Esophagus muscularis mucosa (tissue), 4 donors: ENCODE measurements at regions of chr2 and their contacts with region 1.

Region 1: DNA sequence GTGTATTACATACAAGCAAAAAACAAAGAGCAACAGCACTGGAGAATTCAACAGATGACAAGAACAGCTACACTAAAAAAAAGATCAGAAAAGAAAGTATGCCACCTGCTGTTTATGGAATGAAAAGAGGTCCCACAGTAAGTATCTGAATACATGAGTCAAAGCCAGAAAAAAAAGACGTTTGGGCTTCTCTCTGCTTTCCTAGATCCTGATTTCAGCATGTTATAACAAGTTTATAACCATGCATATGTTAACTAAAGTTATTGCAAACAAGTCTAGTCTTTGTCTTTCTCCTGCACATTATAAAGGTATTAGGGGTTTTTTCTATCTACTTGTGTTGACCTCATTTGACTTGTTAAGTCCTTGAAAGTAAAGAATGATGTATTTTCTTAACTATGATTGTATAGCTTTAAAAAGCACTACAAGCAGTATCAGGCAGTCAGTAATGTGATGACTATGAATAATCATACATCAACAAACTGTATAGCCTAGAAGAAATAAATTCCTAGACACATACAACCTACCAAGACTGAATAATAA is 108.5 kb upstream of the COL5A2 start:
- DNase-seq: no peak
- H3K4me3 ChIP-seq: no peak overlapping the region
- H3K27ac ChIP-seq: no peak overlapping the region
- H3K4me1 ChIP-seq: peaks cover 0 to 34% (median 18%) of the 10 kb centered on the region in 4 donors
- H3K27me3 ChIP-seq: no peaks in the 10 kb centered on the region
- CTCF ChIP-seq: peak; percentile 51 to 68 (median 64)
- EP300 ChIP-seq: no peak
- POLR2A ChIP-seq: no peak

Region 2: GRCh38 chr2:189115126-189115525 is 172.9 kb before region 1 on chr2:
- intact Hi-C with region 1: loop called (anchors 5 kb)
- DNase-seq: no peak
- H3K4me3 ChIP-seq: no peak overlapping the region
- H3K27ac ChIP-seq: peak overlapping the region in 1 of 4 donors; percentile 14
- H3K4me1 ChIP-seq: peaks cover 0 to 50% (median 21%) of the 10 kb centered on the region in 4 donors
- H3K27me3 ChIP-seq: no peaks in the 10 kb centered on the region
- CTCF ChIP-seq: peak; percentile 25 to 39 (median 37)
- EP300 ChIP-seq: no peak
- POLR2A ChIP-seq: no peak

Region 3: DNA sequence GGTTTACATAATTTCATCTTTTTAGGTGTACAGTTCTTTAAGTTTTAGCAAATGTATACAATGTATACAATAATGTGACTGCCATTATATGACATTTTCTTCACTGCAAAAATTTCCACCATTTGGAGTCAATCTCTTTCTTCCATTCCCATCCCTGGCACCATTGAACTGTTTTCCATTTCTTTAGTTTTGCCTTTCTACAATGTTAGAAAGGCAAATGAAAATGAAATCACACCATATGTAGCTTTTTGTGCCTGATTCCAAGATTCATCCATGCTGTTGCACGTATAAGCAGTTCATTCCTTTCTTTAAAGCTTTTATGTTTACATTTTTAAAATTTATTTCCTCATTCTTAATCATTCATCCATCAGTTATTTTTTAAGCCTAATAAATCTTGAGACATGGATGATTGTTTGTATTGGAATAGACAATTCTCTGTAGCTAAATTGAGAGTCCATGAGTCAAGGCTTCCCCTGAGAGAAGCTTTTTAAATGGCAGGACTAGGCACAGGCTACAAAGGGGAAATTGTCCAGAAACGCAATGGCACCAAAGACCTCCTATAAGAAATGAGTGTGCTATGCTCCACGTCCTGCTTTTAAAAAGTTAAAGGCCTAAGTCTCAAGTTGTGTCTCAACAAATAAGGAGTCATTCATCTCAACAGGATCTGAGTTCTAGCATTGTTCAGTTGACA is 99.8 kb before region 1 on chr2:
- intact Hi-C with region 1: loop called (anchors 10 kb)
- DNase-seq: no peak
- H3K4me3 ChIP-seq: no peak overlapping the region
- H3K27ac ChIP-seq: no peak overlapping the region
- H3K4me1 ChIP-seq: no peaks in the 10 kb centered on the region
- H3K27me3 ChIP-seq: no peaks in the 10 kb centered on the region
- CTCF ChIP-seq: no peak
- EP300 ChIP-seq: no peak
- POLR2A ChIP-seq: no peak

Region 4: DNA sequence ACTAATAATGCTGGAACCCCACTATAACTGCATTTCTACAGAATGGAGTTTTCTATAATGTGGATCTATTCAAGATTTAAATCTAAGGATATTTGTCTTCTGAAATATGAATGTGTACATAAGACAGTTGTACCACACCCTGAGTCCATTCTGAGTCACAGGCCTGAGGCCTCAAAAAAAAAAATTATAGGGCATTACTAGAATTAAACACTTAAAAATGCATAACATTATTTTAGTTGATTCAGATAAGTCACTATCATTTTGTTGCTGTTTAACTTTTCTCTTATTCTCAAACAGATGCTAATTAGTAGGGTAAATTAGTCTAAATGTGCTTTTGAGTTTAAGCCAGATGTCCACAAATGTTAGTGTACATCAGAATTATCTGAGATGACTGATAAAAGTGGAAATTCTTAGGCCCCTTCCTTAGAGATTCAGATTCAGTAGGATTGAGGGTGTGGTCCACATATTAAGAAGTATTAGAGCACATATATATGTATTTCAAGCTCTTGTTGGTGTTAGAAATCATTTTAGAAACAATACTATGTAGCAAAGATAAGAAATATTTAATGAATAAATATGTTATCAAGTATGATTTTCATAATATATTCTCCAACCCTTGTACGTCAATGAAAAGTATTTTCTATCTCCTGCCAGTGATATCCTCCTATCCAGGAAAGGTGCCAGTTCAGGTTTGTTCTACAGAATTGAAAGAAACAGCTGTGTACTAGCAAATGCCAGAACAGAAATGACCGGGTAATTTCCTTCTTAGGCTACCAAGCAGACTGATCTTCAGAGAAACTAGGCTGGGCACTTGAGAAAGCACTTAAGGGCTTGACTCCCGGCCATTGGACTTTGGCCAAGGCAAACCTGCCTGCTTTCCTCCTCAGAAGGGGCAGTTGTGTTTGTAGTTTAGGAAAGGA is 65.9 kb before region 1 on chr2:
- intact Hi-C with region 1: no loop called
- DNase-seq: no peak
- H3K4me3 ChIP-seq: no peak overlapping the region
- H3K27ac ChIP-seq: no peak overlapping the region
- H3K4me1 ChIP-seq: peaks cover 0 to 14% (median 5%) of the 10 kb centered on the region in 4 donors
- H3K27me3 ChIP-seq: no peaks in the 10 kb centered on the region
- CTCF ChIP-seq: no peak
- EP300 ChIP-seq: no peak
- POLR2A ChIP-seq: no peak